ENCODE measurements at regions of chr15 and their contacts with region 1.

Region 1: GRCh38 chr15:31365655-31366127 is 39.1 kb downstream of the KLF13 start:
- DNase-seq: peak; percentile 96 to 98
- ATAC-seq: peak; percentile 69 to 83
- H3K4me3 ChIP-seq: peak overlapping the region; percentile 46 to 62 (median 54)
- H3K27ac ChIP-seq: peak overlapping the region; percentile 95 to 100 (median 97)
- H3K4me1 ChIP-seq: peaks cover 94 to 96% of the 10 kb centered on the region in 2 donors
- H3K27me3 ChIP-seq: no peaks in the 10 kb centered on the region
- CTCF ChIP-seq: peak in 3 of 5 experiments; percentile 13 to 30 (median 17)
- POLR2A ChIP-seq: peak in 1 of 2 donors; percentile 36

Region 2: DNA sequence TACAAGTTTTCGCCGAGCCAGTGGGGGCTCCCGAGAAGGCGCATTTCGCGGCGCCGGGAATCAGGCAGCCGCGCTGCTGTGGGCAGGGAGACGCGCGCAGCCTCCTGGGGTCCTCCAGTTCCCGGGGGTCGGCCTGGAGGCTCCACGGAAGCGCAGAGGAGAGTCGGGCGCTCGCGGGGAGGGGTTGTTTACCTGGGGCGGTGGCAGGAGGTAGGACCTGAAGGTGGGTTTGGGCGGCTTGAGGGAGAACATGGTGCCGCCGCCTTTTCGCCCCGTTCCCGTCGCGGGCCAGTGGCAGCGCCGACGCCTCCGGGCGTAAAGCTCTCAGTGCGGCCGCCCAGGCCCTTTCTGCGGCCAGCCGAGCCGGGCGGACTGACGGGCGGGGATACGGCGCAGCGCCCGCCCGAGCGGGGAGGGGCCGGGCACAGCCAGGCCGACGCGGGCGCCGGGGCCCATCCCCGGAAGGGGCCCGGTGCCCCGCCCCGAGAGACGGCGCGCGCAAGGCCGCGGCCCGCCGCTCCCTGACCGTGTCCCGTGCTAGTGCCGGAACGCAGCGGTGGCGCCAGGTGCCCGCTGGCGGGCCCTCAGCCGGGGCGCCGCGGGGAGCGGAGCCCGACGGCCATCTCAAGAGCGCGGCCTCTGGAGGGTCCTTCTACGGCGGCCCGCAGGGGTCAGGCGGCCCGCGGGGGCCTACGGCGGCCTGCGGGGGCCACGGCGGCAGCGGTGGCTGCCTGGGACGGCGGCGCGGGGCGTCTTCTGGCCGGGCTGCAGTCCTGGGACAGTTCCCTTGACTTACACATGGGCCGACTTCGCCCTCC is 374.2 kb before region 1 on chr15 and contains the start of gene MTMR10:
- in situ Hi-C with region 1: loop called in 1 of 4 experiments (anchors 25 kb)
- intact Hi-C with region 1: loop called (anchors 10 kb)
- DNase-seq: peak; percentile 41 to 76
- ATAC-seq: peak; percentile 84 to 87
- H3K4me3 ChIP-seq: peak within 1 kb of the TSS; percentile 83 to 100 (median 92)
- H3K27ac ChIP-seq: peak within 1 kb of the TSS; percentile 94 to 99 (median 96)
- H3K4me1 ChIP-seq: peaks cover 45 to 52% of the 10 kb centered on the region in 2 donors
- H3K27me3 ChIP-seq: no peaks in the 10 kb centered on the region
- CTCF ChIP-seq: peak in 3 of 5 experiments; percentile 24 to 65 (median 56)
- POLR2A ChIP-seq: peak; percentile 95 to 96
- total RNA-seq, gene MTMR10: 36.6 to 63.4 (median 40.4) TPM

Region 3: DNA sequence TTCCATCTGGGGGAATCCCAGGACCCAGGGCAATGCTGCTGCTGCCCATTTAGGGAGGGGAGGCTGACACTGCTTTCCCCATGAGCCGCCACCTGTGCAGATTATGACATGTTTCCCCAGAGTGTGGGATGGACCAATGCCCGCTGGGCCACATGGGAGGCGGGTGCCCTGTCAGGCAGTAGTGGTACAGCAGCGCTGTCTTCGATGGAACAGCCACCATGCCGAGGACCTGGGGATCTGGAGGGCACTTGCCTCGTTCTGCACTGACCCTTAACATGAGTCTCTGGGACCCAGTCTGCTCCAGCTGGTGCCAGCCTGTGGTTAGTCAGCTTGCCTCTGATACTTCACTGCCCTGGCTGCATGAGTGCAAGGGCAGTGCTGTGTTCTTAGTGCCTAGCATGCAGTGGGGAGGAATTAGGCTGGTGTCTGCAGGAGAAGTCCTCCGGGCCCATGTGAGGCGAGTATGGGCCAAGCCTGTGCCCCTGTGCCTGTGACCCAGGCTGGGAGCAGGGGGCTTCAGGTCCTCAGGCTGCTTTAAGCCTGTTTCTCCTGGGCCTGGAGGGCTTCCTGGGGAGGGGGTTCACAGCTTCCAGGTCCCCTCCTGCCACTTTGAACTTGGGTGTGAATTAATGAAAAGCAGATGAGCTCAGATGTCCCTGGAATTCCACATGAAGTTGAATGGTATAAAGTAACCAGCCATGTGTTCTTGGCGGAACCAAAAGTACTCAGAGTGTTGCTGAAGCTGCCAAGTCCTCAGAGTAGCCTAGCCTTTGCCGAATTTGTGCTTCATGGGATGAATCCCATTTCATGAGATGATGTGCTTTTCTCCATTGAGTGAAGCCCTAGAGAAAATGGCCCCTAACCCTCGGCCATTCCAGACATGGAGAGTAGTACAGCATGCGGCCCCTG is 16.2 kb before region 1 on chr15:
- in situ Hi-C with region 1: no loop called
- intact Hi-C with region 1: loop called (anchors 1 kb)
- DNase-seq: peak; percentile 86 to 97
- ATAC-seq: peak; percentile 44 to 64
- H3K4me3 ChIP-seq: peak overlapping the region in 1 of 4 donors; percentile 14
- H3K27ac ChIP-seq: peak overlapping the region; percentile 95 to 100 (median 97)
- H3K4me1 ChIP-seq: peaks cover 100% of the 10 kb centered on the region in 2 donors
- H3K27me3 ChIP-seq: no peaks in the 10 kb centered on the region
- CTCF ChIP-seq: peak in 1 of 5 experiments; percentile 33
- POLR2A ChIP-seq: peak; percentile 65 to 75

Region 4: DNA sequence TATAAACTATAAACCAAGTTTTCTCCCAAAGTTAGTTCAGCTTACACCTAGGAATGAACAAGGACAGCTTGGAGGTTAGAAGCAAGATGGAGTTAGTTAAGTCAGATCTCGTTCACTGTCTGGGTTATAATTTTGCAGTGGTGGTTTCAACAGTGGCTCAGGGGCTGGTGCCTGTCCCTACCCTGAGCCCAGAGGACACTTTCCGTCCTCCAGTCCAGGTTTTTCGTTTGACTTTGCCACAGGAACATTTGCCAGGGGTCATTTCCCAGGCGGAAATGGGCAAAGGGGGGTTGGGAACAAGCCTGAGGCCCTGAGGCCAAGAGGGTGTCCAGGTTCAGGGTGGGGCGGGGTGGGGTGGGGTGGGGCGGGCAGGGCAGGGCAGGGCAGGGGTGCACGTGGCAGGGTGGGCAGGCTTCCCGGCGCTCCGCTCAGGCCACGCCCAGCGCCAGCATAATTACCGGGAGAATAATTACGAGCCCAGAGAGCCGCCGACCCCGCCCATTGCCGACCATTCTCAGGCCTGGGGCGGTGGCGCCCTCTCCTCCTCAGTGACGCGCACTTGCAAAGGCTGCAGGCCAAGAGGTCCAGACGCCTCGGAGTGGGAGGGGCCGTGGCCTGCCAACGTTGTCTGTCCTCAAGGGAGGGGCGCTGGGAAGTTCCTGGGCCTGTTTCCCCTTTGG is 31.3 kb after region 1 on chr15:
- in situ Hi-C with region 1: no loop called
- intact Hi-C with region 1: loop called (anchors 1 kb)
- DNase-seq: peak; percentile 89 to 96
- ATAC-seq: peak; percentile 77 to 84
- H3K4me3 ChIP-seq: peak overlapping the region; percentile 1 to 41 (median 31)
- H3K27ac ChIP-seq: peak overlapping the region; percentile 87 to 93 (median 90)
- H3K4me1 ChIP-seq: peaks cover 23 to 27% of the 10 kb centered on the region in 2 donors
- H3K27me3 ChIP-seq: no peaks in the 10 kb centered on the region
- CTCF ChIP-seq: peak in 2 of 5 experiments; percentile 20 to 32
- POLR2A ChIP-seq: no peak

Region 5: DNA sequence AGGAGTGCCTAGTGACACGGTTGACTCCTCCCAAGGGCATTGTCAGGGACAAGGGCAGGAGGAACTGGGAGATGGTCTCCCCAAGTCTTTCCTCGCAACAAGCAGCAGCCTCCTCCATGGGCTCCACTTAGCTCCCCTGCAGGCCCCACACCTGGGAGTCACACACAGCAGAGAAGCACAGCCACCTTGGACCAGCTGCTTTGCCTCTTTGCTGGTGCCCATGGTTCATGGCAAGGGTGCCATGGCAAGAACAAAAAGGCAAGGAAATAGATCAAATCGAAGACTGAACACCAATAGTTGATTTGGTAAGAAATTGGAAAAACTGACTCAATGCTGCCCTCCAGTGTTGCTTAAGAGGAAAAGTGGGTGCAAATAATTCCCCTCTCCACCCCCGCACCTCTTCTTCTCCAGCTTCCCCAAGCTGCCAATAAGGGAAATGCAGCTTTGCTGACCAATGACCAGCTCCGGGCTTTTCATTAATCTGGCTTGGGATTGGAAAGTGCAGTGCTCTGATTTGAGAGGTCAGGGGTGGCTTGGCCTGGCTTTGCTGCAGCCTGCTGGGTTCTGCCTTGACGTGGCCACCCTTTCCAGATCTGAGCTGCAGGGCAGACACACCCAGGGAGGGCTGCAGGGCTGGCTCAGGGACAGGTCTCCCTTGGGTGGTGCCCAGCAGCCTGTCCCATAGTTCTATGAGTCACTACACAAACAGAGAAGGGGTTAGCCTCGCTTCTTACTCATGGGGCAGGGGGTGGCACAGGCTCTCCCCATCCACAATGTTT is 122.9 kb after region 1 on chr15:
- in situ Hi-C with region 1: no loop called
- intact Hi-C with region 1: loop called (anchors 1 kb)
- DNase-seq: peak; percentile 29 to 43
- ATAC-seq: peak; percentile 61 to 70
- H3K4me3 ChIP-seq: no peak overlapping the region
- H3K27ac ChIP-seq: no peak overlapping the region
- H3K4me1 ChIP-seq: peaks cover 8 to 21% of the 10 kb centered on the region in 2 donors
- H3K27me3 ChIP-seq: peaks cover 0 to 3% (median 0%) of the 10 kb centered on the region in 3 donors
- CTCF ChIP-seq: peak; percentile 74 to 89 (median 80)
- POLR2A ChIP-seq: no peak

Measured in gastrocnemius medialis (tissue), 4 donors.